WTC11 (cell line): ENCODE measurements at regions of chr2 and their contacts with region 1.

Region 1: DNA sequence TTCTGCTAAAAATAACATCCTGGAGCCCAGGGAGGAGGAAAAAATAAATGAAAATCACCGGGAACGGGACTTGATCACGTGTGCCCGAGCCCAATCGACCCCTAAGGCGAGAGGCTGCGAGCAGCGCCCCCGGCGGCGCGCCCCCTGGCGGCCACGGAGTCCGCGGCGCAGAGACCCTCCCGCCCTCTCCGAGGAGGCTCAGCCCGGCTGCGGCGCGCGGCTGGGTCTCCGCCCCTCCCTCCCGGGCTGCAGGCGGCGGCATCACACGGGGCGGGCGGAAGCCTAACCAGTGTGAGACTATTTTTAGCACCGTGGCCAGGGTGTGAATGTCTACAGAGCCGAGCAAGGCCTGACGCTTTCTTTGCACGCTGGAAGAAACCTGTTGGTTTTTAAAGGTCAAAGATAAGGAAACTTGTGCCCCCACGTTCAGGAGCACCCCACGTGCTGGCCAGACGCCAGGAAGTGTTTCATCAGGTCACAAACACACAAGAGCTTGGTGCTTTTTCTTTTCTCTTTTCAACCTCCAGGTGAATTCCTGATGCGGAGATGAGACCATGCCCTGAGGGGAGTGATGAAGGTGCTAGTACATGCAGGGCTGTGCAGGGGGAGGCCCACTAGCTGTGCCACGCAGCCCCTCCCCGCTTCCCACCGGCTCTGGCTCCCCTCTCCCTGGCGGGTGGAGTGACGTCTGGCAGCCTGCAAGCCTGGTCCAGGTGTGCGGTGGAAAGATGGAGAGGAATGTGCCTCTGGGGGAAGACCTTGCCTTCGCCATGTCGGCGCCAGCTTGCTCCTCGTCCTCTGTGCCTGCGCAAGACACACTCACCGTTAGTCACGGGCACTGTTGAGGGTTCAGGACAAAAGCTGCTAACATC is 35.3 kb upstream of the DNMT3A start:
- DNase-seq: peak; percentile 92
- ATAC-seq: peak; percentile 95
- H3K4me3 Mint-ChIP-seq: peak overlapping the region; percentile 52
- H3K27ac Mint-ChIP-seq: peak overlapping the region; percentile 48; the same call in 1 of the 2 replicates
- H3K4me1 Mint-ChIP-seq: peaks cover 16% of the 10 kb centered on the region
- H3K27me3 Mint-ChIP-seq: peaks cover 26% of the 10 kb centered on the region
- CTCF ChIP-seq: peak; percentile 91

Region 2: GRCh38 chr2:25041928-25042320 is 335.1 kb before region 1 on chr2 and contains the start of gene EFR3B:
- CTCF ChIA-PET with region 1: no interaction called
- POLR2A ChIA-PET with region 1: interaction called, 10 read pairs
- DNase-seq: peak; percentile 96
- ATAC-seq: peak; percentile 94
- H3K4me3 Mint-ChIP-seq: peak within 1 kb of the TSS; percentile 86
- H3K27ac Mint-ChIP-seq: peak within 1 kb of the TSS; percentile 91
- H3K4me1 Mint-ChIP-seq: peaks cover 32% of the 10 kb centered on the region
- H3K27me3 Mint-ChIP-seq: peaks cover 44% of the 10 kb centered on the region
- CTCF ChIP-seq: no peak
- total RNA-seq, gene EFR3B: 8.9 to 10.1 TPM (median 9.7 TPM) in 3 replicates

Region 3: DNA sequence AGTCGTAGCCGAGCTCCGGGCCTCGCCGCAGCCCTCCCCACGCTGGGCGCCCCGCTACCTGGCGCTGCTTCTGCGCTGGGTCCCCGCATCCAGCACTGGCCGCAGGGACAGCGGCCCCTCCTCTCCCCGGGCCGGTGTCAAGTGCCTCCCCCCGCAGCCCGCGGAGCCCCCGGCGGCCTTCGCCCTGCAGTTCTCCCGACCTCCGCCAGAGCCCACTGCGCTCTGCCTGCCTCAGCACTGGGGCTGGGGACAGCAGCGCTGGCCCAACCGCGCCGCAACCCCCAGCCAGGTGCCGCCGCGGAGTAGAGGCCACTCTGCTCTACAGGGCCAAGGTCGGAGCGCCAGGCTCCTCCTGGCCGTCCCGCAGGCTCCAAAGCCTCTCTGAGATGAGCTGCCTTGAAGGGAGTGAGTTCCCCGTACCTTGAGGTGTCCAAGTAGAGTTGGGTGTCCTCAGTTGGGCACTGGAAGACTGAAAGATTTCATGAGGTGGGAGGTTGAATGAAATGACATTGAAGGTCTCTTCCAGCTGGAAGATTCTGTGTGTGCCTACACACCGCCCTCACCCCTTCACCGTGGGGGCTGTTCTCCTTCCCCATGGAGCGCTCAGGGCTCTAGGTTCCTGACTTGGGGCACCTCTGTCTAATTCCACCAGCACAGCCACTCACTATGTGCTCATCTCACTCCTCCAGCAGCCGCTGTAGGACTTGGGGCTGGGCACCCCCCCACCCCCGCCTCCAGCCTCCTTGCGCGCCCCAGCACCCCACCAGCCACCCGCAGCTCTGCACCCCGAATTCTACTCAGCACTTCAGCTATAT is 34.4 kb before region 1 on chr2:
- CTCF ChIA-PET with region 1: interaction called, 14 read pairs
- POLR2A ChIA-PET with region 1: interaction called, 3 read pairs
- DNase-seq: peak; percentile 95
- ATAC-seq: peak; percentile 83
- H3K4me3 Mint-ChIP-seq: peak overlapping the region; percentile 65
- H3K27ac Mint-ChIP-seq: no peak overlapping the region
- H3K4me1 Mint-ChIP-seq: peaks cover 29% of the 10 kb centered on the region
- H3K27me3 Mint-ChIP-seq: peaks cover 28% of the 10 kb centered on the region
- CTCF ChIP-seq: peak; percentile 93

Region 4: DNA sequence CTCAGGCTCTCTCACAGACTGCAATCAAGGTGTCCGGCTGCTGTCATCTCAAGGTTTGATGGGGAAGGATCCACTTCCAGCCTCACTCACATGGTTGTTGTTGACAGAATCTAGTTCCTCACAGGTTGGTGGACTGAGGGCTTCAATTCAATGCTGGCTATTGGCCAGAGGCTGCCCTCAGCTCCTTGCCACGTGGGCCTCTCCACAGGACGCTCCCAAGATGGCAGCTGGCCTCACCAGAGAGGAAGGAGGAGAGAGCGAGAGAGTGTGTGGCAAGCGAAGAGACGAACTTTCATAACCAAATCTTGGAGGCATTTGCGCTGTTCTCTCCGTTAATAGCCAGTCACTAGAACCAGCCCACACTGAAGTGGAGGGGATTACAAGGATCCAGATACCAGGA is 21.7 kb before region 1 on chr2:
- CTCF ChIA-PET with region 1: no interaction called
- POLR2A ChIA-PET with region 1: no interaction called
- DNase-seq: no peak
- ATAC-seq: no peak
- H3K4me3 Mint-ChIP-seq: no peak overlapping the region
- H3K27ac Mint-ChIP-seq: no peak overlapping the region
- H3K4me1 Mint-ChIP-seq: no peaks in the 10 kb centered on the region
- H3K27me3 Mint-ChIP-seq: peaks cover 38% of the 10 kb centered on the region
- CTCF ChIP-seq: no peak

Region 5: DNA sequence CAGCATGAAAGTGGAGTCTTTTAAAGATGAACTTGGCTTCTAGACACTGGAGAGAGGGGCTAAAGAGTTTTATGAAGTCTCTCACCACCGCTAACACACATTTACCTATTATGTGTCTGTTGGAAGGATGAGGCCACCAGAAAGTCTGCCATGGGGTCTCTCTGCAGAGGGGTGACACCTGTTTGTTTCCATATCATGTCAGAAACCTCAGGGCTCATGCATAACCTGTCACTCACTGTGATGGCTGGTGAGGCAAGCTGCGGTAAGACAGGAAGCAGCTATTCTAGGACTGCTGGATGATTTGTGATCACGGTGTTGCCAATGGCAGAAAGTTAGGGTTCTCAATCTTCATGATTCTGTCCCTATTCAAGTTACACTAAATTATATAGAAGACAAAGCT is 25.5 kb after region 1 on chr2:
- CTCF ChIA-PET with region 1: no interaction called
- POLR2A ChIA-PET with region 1: no interaction called
- DNase-seq: no peak
- ATAC-seq: no peak
- H3K4me3 Mint-ChIP-seq: no peak overlapping the region
- H3K27ac Mint-ChIP-seq: no peak overlapping the region
- H3K4me1 Mint-ChIP-seq: peaks cover 12% of the 10 kb centered on the region
- H3K27me3 Mint-ChIP-seq: no peaks in the 10 kb centered on the region
- CTCF ChIP-seq: no peak